ENCODE measurements at regions of chr19 and their contacts with region 1.

Region 1: DNA sequence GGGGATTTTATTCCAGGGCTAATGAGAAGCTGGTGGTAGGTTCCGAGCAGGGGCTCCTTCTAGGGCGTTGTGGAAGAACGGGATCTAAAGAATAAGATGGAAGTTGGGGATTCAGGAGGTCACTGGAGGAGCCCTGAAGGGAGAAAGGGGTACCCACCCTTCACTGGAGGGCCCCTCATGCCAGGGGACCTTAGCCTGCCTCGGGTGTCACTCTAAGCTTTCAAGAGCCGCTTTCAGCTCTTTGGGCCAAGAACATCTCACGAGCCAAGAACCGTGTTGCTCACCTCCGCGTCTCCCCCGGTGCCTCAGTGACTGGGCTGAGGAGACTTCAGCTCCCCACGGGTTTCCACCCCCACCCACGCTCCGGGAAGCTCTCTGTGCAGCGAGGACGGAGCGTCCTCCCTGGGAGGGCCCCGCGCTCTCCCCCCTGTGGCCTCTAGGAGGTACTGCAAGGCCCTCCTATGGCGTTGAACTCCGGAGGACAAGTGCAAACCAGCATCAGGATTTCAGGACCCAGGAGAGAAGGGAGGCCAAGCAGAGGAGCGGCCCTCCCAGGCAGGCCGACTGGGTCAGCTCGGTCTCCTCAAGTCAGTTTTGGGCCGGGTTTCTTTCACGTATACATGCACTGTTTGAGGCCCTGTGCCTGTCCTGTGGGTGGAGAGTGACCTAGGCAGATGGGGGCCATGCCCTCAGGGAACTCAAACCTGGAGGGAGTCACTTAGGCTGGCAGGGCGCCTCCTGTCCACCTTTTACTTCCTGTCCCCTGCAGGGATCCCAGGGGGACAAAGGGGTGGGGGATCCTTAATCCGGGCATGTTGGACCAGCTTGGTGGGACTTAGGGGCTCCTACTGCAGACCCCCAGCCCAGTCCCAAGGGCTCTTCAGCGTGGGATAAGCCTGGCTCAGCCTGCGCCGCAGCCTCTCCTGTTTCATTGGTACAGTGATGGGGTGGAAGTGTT is 5.1 kb upstream of the KRTDAP start:
- DNase-seq: peak; percentile 58 to 76 (median 70)
- H3K4me3 ChIP-seq: no peak overlapping the region
- H3K27ac ChIP-seq: no peak overlapping the region
- H3K4me1 ChIP-seq: no peaks in the 10 kb centered on the region
- H3K27me3 ChIP-seq: no peaks in the 10 kb centered on the region
- CTCF ChIP-seq: peak; percentile 89 to 95 (median 91)
- EP300 ChIP-seq: no peak
- POLR2A ChIP-seq: no peak

Region 2: DNA sequence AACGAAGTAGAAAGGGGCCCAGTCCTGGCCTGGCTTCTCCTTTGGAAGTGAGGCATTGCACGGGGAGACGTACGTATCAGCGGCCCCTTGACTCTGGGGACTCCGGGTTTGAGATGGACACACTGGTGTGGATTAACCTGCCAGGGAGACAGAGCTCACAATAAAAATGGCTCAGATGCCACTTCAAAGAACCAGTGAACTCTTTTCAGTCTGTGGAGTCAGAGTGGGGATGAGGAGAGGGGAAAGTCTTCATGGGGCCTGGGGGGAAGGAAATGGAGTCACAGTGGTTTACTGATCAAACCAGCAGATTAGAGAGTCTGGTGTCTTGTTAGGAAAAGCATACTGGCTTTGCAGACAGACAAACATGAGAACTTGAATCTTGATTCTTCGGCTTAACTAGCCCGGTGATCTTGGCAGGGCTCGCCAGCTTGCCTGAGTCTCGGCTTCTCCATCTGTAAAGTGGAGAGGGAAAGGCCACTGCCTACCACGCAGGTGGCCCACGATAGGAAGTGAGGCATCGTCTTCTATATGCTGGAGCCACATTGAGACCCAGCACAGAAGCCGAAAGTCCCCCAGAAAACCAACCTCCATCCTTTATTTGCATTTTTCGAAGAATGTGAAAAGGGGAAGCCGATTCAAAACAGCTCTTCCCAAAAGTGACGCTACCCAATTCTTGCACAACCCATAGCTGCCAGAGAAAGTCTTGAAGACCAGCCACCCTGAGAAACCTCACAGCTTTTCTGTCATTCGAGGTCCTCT is 148.0 kb before region 1 on chr19 and contains the start of gene FFAR1:
- intact Hi-C with region 1: loop called (anchors 5 to 10 kb)
- DNase-seq: peak in 4 of 5 donors; percentile 12 to 30 (median 19)
- H3K4me3 ChIP-seq: no peak within 1 kb of the TSS
- H3K27ac ChIP-seq: peak within 1 kb of the TSS in 1 of 2 donors; percentile 72
- H3K4me1 ChIP-seq: peaks cover 3% of the 10 kb centered on the region
- H3K27me3 ChIP-seq: no peaks in the 10 kb centered on the region
- CTCF ChIP-seq: no peak
- EP300 ChIP-seq: no peak
- POLR2A ChIP-seq: no peak
- total RNA-seq, gene FFAR1: 0.11 to 5.0 (median 1.8) TPM

Region 3: DNA sequence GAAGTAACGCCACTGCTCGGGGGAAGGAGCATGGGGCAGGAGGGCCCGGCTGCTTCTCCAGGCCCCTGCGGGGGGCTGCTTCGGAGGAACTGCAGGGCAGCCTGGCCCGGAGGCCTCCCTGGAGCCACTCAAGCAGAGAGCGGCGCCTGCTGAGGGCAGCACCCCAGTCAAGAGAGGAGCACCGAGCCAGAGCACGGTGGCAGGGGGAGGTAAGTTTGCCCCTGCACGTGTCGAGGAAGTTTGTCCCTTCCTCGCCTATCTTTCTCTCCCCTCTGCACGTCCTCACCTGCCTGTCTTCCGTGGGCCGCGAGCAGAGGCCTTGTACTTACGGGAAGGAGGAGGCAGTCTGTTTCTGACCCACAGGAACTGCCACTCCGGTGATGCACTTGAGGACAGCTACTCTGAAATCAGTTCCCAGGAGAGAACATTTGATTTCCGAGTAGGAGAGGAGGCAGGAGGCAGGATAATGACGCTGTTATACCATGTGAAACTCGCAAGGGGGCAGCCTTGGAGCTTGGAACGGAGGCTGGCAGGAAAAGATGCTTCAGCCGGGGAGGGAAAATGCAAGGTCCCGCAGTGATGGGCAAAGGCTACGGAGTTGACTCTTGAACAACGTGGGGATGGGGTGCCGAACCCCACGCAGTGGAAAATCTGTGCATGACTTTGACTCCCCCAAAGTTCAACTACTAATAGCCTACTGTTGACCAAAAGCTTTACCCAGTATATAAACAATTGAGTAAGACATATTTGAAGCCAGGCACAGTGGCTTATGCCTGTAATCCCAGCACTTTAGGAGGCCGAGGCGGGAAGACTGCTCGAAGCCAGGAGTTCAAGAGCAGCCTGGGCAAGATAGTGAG is 142.7 kb before region 1 on chr19:
- intact Hi-C with region 1: loop called (anchors 5 to 10 kb)
- DNase-seq: peak; percentile 66 to 78 (median 75)
- H3K4me3 ChIP-seq: no peak overlapping the region
- H3K27ac ChIP-seq: no peak overlapping the region
- H3K4me1 ChIP-seq: peaks cover 3% of the 10 kb centered on the region
- H3K27me3 ChIP-seq: no peaks in the 10 kb centered on the region
- CTCF ChIP-seq: peak; percentile 52 to 78 (median 75)
- EP300 ChIP-seq: no peak
- POLR2A ChIP-seq: no peak